ENCODE measurements at regions of chr15 and their contacts with region 1.

Region 1: GRCh38 chr15:74545880-74546656 is 5.0 kb downstream of the ARID3B start:
- DNase-seq: peak; percentile 69 to 99 (median 98)
- H3K4me3 ChIP-seq: peak overlapping the region in 45 of 59 donors; percentile 0 to 50 (median 25)
- H3K27ac ChIP-seq: peak overlapping the region in 7 of 59 donors; percentile 3 to 59 (median 29)
- H3K27me3 ChIP-seq: no peaks in the 10 kb centered on the region
- CTCF ChIP-seq: peak in 40 of 56 donors; percentile 9 to 61 (median 34)

Region 2: DNA sequence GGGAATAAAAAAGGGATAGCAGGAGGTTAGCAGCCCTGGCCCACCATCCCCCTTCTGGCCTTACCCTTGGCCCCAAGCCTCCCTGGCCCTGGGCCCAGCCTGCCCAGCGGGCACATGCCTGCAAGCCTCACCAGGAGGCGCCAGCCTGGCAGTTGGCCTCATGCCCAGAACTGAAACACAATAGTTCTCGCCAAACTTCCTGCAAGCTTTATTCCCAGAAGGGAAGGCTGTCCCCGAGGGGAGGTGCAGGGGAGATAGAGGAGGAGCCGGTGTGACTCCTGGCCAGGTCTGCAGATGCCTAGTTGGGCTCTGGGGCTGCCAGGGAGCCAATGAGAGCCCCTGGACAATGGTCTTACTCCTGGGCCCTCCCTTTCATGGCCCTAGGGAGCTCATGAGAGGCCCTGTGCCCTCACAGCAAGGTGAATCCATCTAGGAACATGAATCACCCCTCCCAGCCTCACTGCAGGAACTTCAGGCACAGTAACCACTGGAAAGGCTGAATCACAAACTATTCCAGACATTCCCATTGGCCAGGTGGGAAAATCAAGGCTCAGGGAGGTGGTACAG is 306.0 kb before region 1 on chr15:
- intact Hi-C with region 1: no loop called
- DNase-seq: peak; percentile 57 to 89 (median 82)
- H3K4me3 ChIP-seq: no peak overlapping the region
- H3K27ac ChIP-seq: peak overlapping the region in 37 of 59 donors; percentile 4 to 80 (median 56)
- H3K27me3 ChIP-seq: no peaks in the 10 kb centered on the region
- CTCF ChIP-seq: peak in 53 of 56 donors; percentile 22 to 73 (median 57)

Region 3: DNA sequence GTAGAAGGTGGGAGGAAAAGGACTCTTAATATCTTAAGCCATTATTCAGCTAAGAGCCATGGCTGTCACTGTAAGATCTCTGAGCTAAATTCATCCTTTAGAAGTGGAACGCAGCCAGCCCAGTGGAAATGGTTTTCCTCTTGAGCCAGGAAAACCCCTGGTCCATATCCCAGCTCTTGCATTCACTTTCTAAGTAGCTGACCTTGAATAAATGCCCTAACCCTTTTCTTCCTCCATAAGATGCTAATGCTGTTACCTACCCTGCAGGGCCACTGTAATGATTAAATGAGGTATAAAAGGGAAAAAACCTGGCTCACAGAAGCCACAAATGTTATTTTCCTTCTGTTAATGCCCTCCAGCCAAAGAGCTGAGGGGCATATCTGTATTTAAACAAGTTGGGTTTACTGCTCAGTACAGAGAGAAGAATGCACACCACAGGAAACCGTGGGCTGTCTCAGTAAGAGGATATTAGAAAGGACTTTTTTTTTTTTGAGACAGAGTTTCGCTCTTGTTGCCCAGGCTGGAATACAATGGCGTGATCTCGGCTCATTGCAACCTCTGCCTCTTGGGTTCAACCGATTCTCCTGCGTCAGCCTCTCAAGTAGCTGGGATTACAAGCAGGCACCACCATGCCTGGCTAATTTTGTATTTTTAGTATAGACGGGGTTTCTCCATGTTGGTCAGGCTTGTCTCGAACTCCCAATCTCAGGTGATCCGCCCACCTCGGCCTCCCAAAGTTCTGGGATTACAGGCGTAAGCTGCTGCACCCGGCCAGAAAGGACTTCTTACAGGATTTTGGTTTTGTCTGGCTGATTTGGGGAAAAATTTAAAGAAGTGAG is 91.9 kb before region 1 on chr15:
- intact Hi-C with region 1: loop called in 1 of 2 experiments (anchors 2 kb)
- DNase-seq: no peak
- H3K4me3 ChIP-seq: no peak overlapping the region
- H3K27ac ChIP-seq: peak overlapping the region in 33 of 59 donors; percentile 1 to 89 (median 35)
- H3K27me3 ChIP-seq: no peaks in the 10 kb centered on the region
- CTCF ChIP-seq: no peak

Region 4: DNA sequence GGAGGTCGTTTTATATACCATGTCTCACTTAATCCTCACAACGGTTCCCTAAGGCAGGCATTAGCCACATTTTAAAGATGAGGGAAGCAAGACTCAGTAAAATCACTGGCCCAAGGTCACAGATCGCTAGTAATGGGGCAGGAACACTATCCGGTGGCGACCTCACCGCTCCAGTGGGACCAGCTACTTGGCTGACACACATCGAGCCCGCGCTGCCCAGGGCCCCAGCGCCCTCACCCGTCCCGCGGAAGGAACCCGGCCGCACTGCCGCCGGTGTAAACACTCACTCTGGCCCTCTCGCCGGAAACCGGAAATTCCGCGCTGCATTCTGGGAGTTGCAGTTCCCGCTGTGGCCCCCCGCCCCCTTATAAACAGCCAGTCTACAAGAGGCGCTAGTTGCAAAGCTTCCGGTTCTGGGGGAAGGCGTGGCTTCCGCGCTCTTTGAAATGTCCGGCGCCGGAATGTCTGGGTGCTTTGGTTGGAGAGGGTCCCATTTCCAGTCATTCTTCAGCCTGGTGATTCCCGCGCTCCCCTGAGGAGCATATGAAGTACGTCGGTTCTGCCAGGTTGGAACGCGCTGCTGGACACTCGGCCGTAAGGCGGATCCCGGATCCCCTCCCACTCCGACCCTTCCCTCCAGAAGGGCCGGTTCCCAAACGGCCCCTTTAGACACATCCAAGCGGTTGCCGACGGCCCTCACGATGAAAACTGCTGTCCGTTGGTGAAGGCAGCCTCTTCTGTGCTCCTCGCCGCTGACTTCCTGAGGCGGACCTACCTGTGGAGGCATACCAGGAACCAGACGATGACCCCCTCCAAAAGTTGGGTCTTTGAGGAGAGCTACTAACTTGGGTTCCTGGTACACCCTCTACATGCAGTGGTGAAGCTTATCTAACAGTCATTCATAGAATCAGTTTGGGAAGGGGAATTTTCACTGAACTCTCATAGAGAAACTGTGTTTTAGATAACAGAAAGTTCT is 84.9 kb before region 1 on chr15 and contains the start of gene UBL7:
- intact Hi-C with region 1: loop called (anchors 2 kb)
- DNase-seq: peak; percentile 95 to 99 (median 98)
- H3K4me3 ChIP-seq: peak within 1 kb of the TSS; percentile 42 to 98 (median 83)
- H3K27ac ChIP-seq: peak within 1 kb of the TSS in 58 of 59 donors; percentile 5 to 94 (median 83)
- H3K27me3 ChIP-seq: no peaks in the 10 kb centered on the region
- CTCF ChIP-seq: peak in 55 of 56 donors; percentile 27 to 78 (median 53)
- total RNA-seq, gene UBL7: 46.8 to 107 (median 78.1) TPM

Region 5: GRCh38 chr15:74598126-74598842 is 52.2 kb after region 1 on chr15:
- intact Hi-C with region 1: loop called in 1 of 2 experiments (anchors 2 kb)
- DNase-seq: peak; percentile 90 to 97 (median 94)
- H3K4me3 ChIP-seq: peak overlapping the region; percentile 47 to 82 (median 69)
- H3K27ac ChIP-seq: peak overlapping the region in 58 of 59 donors; percentile 20 to 97 (median 85)
- H3K27me3 ChIP-seq: no peaks in the 10 kb centered on the region
- CTCF ChIP-seq: peak in 8 of 56 donors; percentile 9 to 36 (median 14)

Region 6: DNA sequence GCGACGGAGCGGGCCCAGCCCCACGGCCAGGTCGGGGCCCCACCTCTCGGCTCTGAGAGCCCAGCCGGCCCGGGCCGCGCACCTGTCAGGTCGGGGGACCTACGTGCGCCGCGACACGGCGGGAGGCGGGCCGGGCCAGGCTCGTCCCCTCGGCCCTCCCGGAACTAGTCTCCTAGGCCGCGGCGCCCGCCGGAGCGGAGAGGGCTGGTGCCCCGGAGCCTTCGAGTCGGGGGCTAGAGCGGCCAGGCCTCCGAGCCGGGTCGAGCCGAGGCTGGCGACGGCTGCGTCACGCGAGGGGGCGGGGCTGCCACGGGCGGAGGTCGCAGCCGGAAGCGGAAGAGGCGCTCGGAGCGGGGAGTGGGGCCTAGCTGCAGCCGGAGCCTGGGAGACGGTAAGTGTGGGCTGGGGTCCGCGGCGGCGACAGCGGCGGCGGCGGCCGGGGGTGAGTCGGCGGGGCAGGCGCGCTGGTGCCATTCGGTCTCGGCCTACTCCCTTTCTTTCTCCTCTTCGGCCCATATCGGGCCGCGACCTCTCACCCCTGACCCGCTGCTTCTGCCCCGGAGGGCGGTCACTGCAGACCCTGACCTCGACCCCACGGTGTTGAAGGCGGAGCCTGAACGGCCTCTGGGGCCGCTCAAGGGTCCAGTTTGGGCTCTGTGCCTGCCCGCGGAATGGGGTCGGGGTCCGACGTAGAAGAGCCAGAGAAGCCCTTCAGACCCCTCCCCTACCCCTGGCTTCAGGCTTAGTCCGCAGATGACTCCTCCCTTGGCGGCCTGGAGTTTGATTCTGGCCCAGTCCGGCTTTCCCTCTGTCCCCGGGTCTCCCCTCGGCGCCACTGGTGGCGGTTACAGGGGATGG is 69.7 kb after region 1 on chr15 and contains the start of gene CLK3:
- intact Hi-C with region 1: loop called (anchors 1 kb)
- DNase-seq: peak; percentile 80 to 99 (median 94)
- H3K4me3 ChIP-seq: peak within 1 kb of the TSS; percentile 65 to 100 (median 98)
- H3K27ac ChIP-seq: peak within 1 kb of the TSS; percentile 62 to 99 (median 96)
- H3K27me3 ChIP-seq: no peaks in the 10 kb centered on the region
- CTCF ChIP-seq: peak in 30 of 56 donors; percentile 7 to 56 (median 22)
- total RNA-seq, gene CLK3: 41.9 to 96.5 (median 63.3) TPM